A549 (cell line): ENCODE measurements at regions of chr12 and their contacts with region 1.

Region 1: GRCh38 chr12:113422030-113422885 is at the start of gene SDSL:
- DNase-seq: peak; percentile 80 to 90
- ATAC-seq: peak; percentile 87 to 91
- H3K4me3 ChIP-seq: peak within 1 kb of the TSS; percentile 62
- H3K27ac ChIP-seq: peak within 1 kb of the TSS; percentile 83 to 96
- H3K4me1 ChIP-seq: peaks cover 54% of the 10 kb centered on the region
- CTCF ChIP-seq: no peak
- EP300 ChIP-seq: no peak
- POLR2A ChIP-seq: peak; percentile 67
- RAD21 ChIP-seq: 0 out of 5 replicates have a peak, but pooled peaks of 1 of the 2 experiments have one; percentile 1
- polyA plus RNA-seq, gene SDSL: 21.0 and 22.0 TPM in 2 replicates

Region 2: GRCh38 chr12:113196996-113197395 is 225.3 kb before region 1 on chr12:
- CTCF ChIA-PET with region 1: interaction called, 15 read pairs
- POLR2A ChIA-PET with region 1: no interaction called
- DNase-seq: peak; percentile 84 to 94
- ATAC-seq: peak; percentile 91
- H3K4me3 ChIP-seq: no peak overlapping the region
- H3K27ac ChIP-seq: peak overlapping the region in 1 of 2 experiments; percentile 83; a peak in 3 of 6 replicates
- H3K4me1 ChIP-seq: peaks cover 27% of the 10 kb centered on the region
- CTCF ChIP-seq: peak; percentile 84
- EP300 ChIP-seq: no peak
- POLR2A ChIP-seq: no peak
- RAD21 ChIP-seq: peak; percentile 79 to 82

Region 3: DNA sequence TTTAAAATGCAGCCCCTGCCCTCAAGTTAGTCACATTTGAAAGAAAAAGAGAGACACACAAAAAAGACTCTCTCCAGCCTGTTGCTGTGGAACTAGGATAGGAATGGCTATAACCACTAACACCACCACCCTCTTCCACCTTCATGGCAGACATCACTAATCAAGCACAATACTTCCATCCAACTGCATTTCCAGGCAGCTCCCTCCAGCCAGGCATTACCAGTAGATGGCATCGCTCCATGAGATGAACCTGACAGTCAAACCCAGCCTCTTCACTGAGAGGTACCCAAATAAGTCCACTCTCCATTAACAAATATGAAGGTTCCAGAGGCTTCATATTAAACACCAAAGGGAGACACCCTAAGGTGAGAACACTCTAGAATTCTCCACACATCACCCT is 111.8 kb before region 1 on chr12:
- CTCF ChIA-PET with region 1: interaction called, 31 read pairs
- POLR2A ChIA-PET with region 1: interaction called, 4 read pairs
- DNase-seq: peak in 1 of 2 experiments; percentile 71
- ATAC-seq: peak in 1 of 2 experiments; percentile 23; a peak in 1 of 6 replicates
- H3K4me3 ChIP-seq: no peak overlapping the region
- H3K27ac ChIP-seq: no peak overlapping the region
- H3K4me1 ChIP-seq: peaks cover 8% of the 10 kb centered on the region
- CTCF ChIP-seq: peak; percentile 27; the same call in 1 of the 3 replicates
- EP300 ChIP-seq: no peak
- POLR2A ChIP-seq: no peak
- RAD21 ChIP-seq: peak in 1 of 2 experiments; percentile 31; a peak in 1 of 5 replicates

Region 4: GRCh38 chr12:113334786-113335540 is 87.3 kb before region 1 on chr12 and contains the start of gene SLC8B1:
- CTCF ChIA-PET with region 1: interaction called, 10 read pairs
- POLR2A ChIA-PET with region 1: interaction called, 9 read pairs
- DNase-seq: peak; percentile 83 to 86
- ATAC-seq: peak; percentile 94 to 98
- H3K4me3 ChIP-seq: peak within 1 kb of the TSS; percentile 49
- H3K27ac ChIP-seq: peak within 1 kb of the TSS; percentile 57 to 89
- H3K4me1 ChIP-seq: peaks cover 9% of the 10 kb centered on the region
- CTCF ChIP-seq: no peak
- EP300 ChIP-seq: no peak
- POLR2A ChIP-seq: peak; percentile 96
- RAD21 ChIP-seq: no peak
- polyA plus RNA-seq, gene SLC8B1: 11.0 and 14.4 TPM in 2 replicates

Region 5: DNA sequence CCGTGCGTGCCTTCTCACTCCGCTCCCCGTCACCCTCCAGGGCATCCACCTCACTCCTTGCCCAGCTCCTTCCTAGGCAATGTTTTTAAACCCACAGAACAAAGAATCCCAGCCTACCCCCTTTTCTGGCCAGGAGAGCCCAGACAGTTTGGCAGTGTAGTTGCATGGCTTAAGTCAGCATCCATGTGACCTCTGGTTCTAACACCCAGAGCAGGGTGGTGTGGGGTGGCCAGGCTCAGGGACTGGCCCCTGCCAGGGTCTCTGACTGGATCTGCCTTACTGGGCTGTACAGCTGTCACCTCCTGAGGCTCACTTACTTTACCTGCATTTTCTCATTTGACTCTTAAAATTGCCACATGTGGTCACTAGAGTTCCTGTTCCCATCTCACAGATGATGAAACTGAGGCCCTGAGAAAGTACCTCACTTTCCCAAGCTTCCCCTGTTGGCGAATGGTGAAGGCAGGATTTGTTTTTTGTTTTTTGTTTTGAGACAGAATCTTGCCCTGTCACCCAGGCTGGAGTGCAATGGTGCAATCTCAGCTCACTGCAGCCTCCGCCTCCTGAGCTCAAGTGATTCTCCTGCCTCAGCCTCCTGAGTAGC is 36.9 kb before region 1 on chr12:
- CTCF ChIA-PET with region 1: interaction called, 14 read pairs
- POLR2A ChIA-PET with region 1: no interaction called
- DNase-seq: no peak
- ATAC-seq: peak in 1 of 2 experiments; percentile 10; a peak in 2 of 6 replicates
- H3K4me3 ChIP-seq: no peak overlapping the region
- H3K27ac ChIP-seq: no peak overlapping the region
- H3K4me1 ChIP-seq: no peaks in the 10 kb centered on the region
- CTCF ChIP-seq: no peak
- EP300 ChIP-seq: no peak
- POLR2A ChIP-seq: no peak
- RAD21 ChIP-seq: no peak

Region 6: GRCh38 chr12:113403435-113404415 is 18.5 kb before region 1 on chr12 and contains the start of gene SDS:
- CTCF ChIA-PET with region 1: interaction called, 29 read pairs
- POLR2A ChIA-PET with region 1: no interaction called
- DNase-seq: no peak
- ATAC-seq: peak in 1 of 2 experiments; percentile 65; a peak in 3 of 6 replicates
- H3K4me3 ChIP-seq: no peak within 1 kb of the TSS
- H3K27ac ChIP-seq: peak within 1 kb of the TSS in 1 of 2 experiments; percentile 65; a peak in 3 of 6 replicates
- H3K4me1 ChIP-seq: peaks cover 11% of the 10 kb centered on the region; the same call in 2 of the 3 replicates
- CTCF ChIP-seq: no peak
- EP300 ChIP-seq: no peak
- POLR2A ChIP-seq: no peak
- RAD21 ChIP-seq: no peak
- polyA plus RNA-seq, gene SDS: 3.7 and 3.9 TPM in 2 replicates